ENCODE measurements at regions of chr3 and their contacts with region 1.

Region 1: GRCh38 chr3:49445381-49445780 is 16.3 kb upstream of the NICN1 start:
- DNase-seq: no peak
- H3K4me3 ChIP-seq: no peak overlapping the region
- H3K27ac ChIP-seq: no peak overlapping the region
- H3K4me1 ChIP-seq: no peaks in the 10 kb centered on the region
- H3K27me3 ChIP-seq: no peaks in the 10 kb centered on the region
- CTCF ChIP-seq: no peak
- POLR2A ChIP-seq: no peak

Region 2: DNA sequence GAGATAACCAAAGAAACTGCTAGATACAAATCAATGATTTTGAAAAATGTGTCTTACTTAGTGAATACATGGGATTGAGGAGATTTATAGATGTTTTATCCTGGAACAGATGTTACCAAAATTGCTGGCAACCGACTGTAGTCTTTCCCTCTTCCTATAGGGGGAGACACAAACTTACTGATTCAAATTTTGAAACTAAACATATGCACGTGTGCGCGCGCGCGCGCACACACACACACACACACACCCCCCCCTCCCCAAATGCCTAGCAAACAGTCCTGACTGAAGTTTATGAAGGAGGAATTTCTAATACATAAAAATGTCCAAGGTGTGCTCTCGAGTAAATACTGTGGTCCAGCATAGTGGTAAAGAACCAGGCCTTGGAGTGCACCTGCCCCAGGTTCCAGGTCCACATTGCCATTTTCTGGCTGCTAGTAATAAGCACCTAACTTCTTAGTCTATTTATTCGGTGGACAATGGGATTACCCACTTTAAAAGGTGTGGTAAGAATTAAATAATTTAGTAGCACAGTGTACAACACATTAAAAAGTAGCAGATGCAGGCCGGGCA is 149.8 kb before region 1 on chr3:
- intact Hi-C with region 1: loop called (anchors 10 kb)
- DNase-seq: peak in 1 of 2 donors; percentile 12
- H3K4me3 ChIP-seq: no peak overlapping the region
- H3K27ac ChIP-seq: no peak overlapping the region
- H3K4me1 ChIP-seq: peaks cover 0 to 8% of the 10 kb centered on the region in 2 donors
- H3K27me3 ChIP-seq: no peaks in the 10 kb centered on the region
- CTCF ChIP-seq: peak in 4 of 6 experiments; percentile 34 to 63 (median 56)
- POLR2A ChIP-seq: no peak

Measured in thyroid gland (tissue), 4 donors.